CD4-positive, alpha-beta T cell (primary cell): ENCODE measurements at regions of chr15 and their contacts with region 1.

Region 1: GRCh38 chr15:62337934-62338333 is 172.8 kb upstream of the C2CD4B start:
- DNase-seq: no peak
- ATAC-seq: no peak
- H3K4me3 ChIP-seq: no peak overlapping the region
- H3K4me3 Mint-ChIP-seq: no peak overlapping the region
- H3K27ac ChIP-seq: no peak overlapping the region
- H3K27ac Mint-ChIP-seq: no peak overlapping the region
- H3K4me1 ChIP-seq: no peaks in the 10 kb centered on the region
- H3K4me1 Mint-ChIP-seq: no peaks in the 10 kb centered on the region
- H3K27me3 ChIP-seq: no peaks in the 10 kb centered on the region
- H3K27me3 Mint-ChIP-seq: no peaks in the 10 kb centered on the region
- CTCF ChIP-seq: no peak

Region 2: DNA sequence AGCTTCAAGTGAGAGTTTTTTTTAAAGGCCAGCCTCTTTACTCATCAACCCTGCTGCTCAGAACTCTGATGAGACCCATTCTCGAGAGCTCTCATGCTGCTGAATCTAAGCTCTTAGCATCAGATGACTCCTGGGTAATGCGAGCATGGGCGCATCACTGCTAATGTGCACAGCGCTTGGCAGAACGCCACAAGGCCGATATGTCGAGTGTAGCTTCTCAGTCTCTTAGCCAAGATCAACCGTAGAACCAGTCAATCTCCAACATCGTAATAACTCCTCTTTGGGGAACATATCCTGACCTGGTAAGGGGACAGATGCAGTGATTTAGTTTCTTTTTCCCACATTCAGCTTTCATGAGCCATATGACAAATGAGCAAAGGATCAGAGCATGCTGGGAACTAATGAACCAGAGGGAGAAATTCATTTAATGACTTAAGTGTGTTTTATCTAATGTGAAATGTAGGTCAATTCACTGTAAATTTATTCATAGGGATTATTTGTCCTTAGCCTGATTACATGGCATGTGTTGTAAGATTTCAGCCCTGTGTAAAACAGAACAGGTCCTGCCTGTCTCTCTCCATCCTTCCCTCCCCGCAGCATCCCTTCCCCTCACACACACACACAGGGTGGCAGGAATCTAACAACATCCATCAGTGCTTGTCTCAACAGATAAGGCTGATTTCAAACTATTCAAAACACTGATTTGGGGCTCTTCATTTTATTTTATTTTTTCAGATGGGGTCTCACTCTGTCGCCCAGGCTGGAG is 22.6 kb after region 1 on chr15:
- CTCF ChIA-PET with region 1: no interaction called
- POLR2A ChIA-PET with region 1: no interaction called
- intact Hi-C with region 1: loop called in 1 of 2 experiments (anchors 1 kb)
- DNase-seq: no peak
- ATAC-seq: no peak
- H3K4me3 ChIP-seq: no peak overlapping the region
- H3K4me3 Mint-ChIP-seq: no peak overlapping the region
- H3K27ac ChIP-seq: no peak overlapping the region
- H3K27ac Mint-ChIP-seq: no peak overlapping the region
- H3K4me1 ChIP-seq: no peaks in the 10 kb centered on the region
- H3K4me1 Mint-ChIP-seq: no peaks in the 10 kb centered on the region
- H3K27me3 ChIP-seq: peaks cover 4 to 7% of the 10 kb centered on the region in 2 experiments
- H3K27me3 Mint-ChIP-seq: peaks cover 59% of the 10 kb centered on the region
- CTCF ChIP-seq: no peak